Adrenal gland (tissue), 19 donors: ENCODE measurements at regions of chr4 and their contacts with region 1.

Region 1: GRCh38 chr4:81405894-81406401 is 65.8 kb downstream of the RASGEF1B start:
- DNase-seq: peak in 6 of 7 donors; percentile 46 to 66 (median 54)
- H3K4me3 ChIP-seq: peak overlapping the region in 1 of 4 donors; percentile 9
- H3K27ac ChIP-seq: no peak overlapping the region
- H3K4me1 ChIP-seq: peaks cover 0 to 4% of the 10 kb centered on the region in 2 donors
- H3K27me3 ChIP-seq: no peaks in the 10 kb centered on the region
- CTCF ChIP-seq: peak; percentile 69 to 97 (median 80)
- POLR2A ChIP-seq: no peak

Region 2: DNA sequence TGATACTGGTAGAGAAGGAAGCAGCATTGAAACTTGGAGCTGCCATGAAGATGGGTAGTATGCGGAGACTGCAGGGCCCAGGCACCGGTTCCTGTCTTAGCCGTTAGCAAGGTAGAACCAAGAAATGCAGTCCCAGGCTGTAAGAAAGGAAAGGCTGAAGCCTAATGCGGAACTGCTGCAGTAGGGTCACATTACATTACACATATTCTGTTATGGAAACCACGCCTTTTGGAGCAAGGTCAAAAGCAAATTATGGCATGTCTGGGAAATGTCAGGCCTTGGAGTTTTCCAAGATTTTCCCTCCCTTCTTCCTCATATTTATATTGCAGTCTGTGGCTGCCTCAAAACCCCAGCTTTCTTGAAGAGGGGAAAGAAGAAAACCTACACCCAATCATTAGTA is 270.6 kb after region 1 on chr4:
- intact Hi-C with region 1: no loop called
- DNase-seq: no peak
- H3K4me3 ChIP-seq: no peak overlapping the region
- H3K27ac ChIP-seq: no peak overlapping the region
- H3K4me1 ChIP-seq: no peaks in the 10 kb centered on the region
- H3K27me3 ChIP-seq: no peaks in the 10 kb centered on the region
- CTCF ChIP-seq: no peak
- POLR2A ChIP-seq: no peak

Region 3: GRCh38 chr4:81844717-81845116 is 438.8 kb after region 1 on chr4:
- intact Hi-C with region 1: loop called in 1 of 2 experiments (anchors 10 kb)
- DNase-seq: peak; percentile 64 to 93 (median 82)
- H3K4me3 ChIP-seq: no peak overlapping the region
- H3K27ac ChIP-seq: no peak overlapping the region
- H3K4me1 ChIP-seq: peaks cover 0 to 7% of the 10 kb centered on the region in 2 donors
- H3K27me3 ChIP-seq: no peaks in the 10 kb centered on the region
- CTCF ChIP-seq: peak; percentile 71 to 86 (median 77)
- POLR2A ChIP-seq: no peak

Region 4: GRCh38 chr4:82201805-82202641 is 796.1 kb after region 1 on chr4:
- intact Hi-C with region 1: loop called (anchors 10 kb)
- DNase-seq: peak in 6 of 7 donors; percentile 24 to 65 (median 52)
- H3K4me3 ChIP-seq: no peak overlapping the region
- H3K27ac ChIP-seq: no peak overlapping the region
- H3K4me1 ChIP-seq: no peaks in the 10 kb centered on the region
- H3K27me3 ChIP-seq: no peaks in the 10 kb centered on the region
- CTCF ChIP-seq: peak; percentile 26 to 70 (median 62)
- POLR2A ChIP-seq: no peak

Region 5: GRCh38 chr4:82268050-82268825 is 862.3 kb after region 1 on chr4:
- intact Hi-C with region 1: loop called (anchors 10 kb)
- DNase-seq: peak; percentile 56 to 75 (median 67)
- H3K4me3 ChIP-seq: no peak overlapping the region
- H3K27ac ChIP-seq: peak overlapping the region in 3 of 5 donors; percentile 17 to 52 (median 24)
- H3K4me1 ChIP-seq: no peaks in the 10 kb centered on the region
- H3K27me3 ChIP-seq: no peaks in the 10 kb centered on the region
- CTCF ChIP-seq: peak; percentile 70 to 86 (median 84)
- POLR2A ChIP-seq: no peak

Region 6: DNA sequence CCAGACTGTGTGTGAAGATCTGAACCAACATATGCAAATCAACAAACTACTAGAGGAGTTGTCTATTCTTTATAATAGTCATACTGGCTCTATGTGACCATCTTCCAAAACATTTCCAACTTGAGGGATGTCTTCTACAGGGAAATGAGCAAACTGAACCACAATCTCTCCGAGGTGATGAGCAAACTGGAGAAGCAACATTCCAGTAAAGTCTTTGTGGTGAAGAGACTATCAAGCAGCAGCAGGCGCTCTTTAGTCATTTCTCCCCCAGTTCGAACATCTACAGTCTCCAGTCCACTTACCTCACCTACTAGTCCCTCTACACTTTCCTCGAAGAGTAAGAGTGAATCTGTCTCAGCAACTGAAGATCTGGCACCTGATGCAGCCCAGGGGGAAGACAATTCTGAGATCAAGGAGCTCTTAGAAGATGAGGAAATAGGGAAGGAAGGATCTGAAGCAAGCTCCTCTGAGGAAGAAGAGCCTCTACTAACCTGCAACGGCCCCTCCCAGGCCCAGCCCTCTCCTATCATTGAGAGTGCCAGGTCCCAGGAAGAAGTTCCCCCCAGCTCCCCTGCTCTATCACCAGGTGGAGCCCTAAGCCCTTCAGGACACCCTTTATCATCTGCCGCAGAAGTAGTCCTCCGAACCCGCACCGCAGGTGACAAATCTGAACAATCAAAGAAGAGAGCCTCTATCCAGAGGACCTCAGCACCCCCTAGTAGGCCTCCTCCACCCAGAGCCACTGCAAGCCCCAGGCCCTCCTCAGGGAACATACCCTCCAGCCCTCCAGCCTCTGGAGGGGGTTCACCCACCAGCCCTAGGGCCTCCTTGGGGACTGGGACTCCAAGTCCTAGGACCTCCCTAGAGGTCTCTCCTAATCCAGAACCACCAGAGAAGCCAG is 869.7 kb after region 1 on chr4:
- intact Hi-C with region 1: loop called in 1 of 2 experiments (anchors 10 kb)
- DNase-seq: no peak
- H3K4me3 ChIP-seq: no peak overlapping the region
- H3K27ac ChIP-seq: no peak overlapping the region
- H3K4me1 ChIP-seq: no peaks in the 10 kb centered on the region
- H3K27me3 ChIP-seq: no peaks in the 10 kb centered on the region
- CTCF ChIP-seq: no peak
- POLR2A ChIP-seq: no peak